Activated B cell treated with CpG ODN at 0.5 μM for 24 hours (primary cell): ENCODE measurements at regions of chr4 and their contacts with region 1.

Region 1: DNA sequence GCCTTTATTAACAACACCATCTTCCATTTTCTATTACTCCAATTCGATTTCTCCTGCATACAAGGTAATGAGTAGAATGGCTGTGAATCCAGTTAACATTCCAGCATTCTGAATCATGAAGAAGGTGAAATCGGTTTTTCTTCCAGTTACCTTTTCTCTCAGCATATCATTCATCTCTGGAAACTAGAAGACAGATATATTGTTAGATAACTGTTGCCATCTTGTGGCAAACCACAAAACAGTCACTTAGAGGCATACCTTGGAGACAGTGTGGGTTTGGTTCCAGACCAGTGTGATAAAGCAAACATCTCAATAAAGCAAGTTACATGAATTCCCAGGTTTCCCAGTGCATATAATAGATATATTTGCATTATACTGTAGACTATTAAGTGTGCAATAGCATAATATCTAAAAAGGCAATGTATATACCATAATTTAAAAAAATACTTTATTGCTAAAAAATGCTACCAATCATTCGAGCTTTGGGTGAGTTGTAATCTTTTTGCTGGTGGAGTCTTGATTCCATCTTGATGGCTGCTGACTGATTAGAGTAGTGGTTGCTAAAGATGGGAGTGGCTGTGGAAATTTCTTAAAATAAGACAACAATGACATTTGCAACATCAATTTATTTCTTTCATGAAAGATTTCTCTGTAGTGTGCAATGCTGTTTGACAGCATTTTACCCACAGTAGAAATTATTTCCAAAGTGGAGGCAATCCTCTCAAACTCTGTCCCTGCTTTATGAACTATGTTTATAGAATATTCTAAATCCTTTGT is 82.1 kb downstream of the SLC39A8 start:
- DNase-seq: no peak
- ATAC-seq: peak; percentile 79
- H3K4me3 Mint-ChIP-seq: no peak overlapping the region
- H3K27ac Mint-ChIP-seq: no peak overlapping the region
- H3K4me1 Mint-ChIP-seq: peaks cover 2% of the 10 kb centered on the region
- H3K27me3 Mint-ChIP-seq: no peaks in the 10 kb centered on the region
- CTCF ChIP-seq: peak; percentile 25

Region 2: GRCh38 chr4:100848869-100849268 is 1414.3 kb before region 1 on chr4:
- CTCF ChIA-PET with region 1: interaction called, 4 read pairs
- POLR2A ChIA-PET with region 1: no interaction called
- intact Hi-C with region 1: loop called (anchors 5 kb)
- DNase-seq: no peak
- ATAC-seq: no peak
- H3K4me3 Mint-ChIP-seq: no peak overlapping the region
- H3K27ac Mint-ChIP-seq: no peak overlapping the region
- H3K4me1 Mint-ChIP-seq: no peaks in the 10 kb centered on the region
- H3K27me3 Mint-ChIP-seq: no peaks in the 10 kb centered on the region
- CTCF ChIP-seq: no peak

Region 3: GRCh38 chr4:100935090-100935489 is 1328.1 kb before region 1 on chr4:
- CTCF ChIA-PET with region 1: interaction called, 3 read pairs
- POLR2A ChIA-PET with region 1: no interaction called
- intact Hi-C with region 1: loop called (anchors 2 kb)
- DNase-seq: no peak
- ATAC-seq: no peak
- H3K4me3 Mint-ChIP-seq: no peak overlapping the region
- H3K27ac Mint-ChIP-seq: no peak overlapping the region
- H3K4me1 Mint-ChIP-seq: peaks cover 2% of the 10 kb centered on the region
- H3K27me3 Mint-ChIP-seq: no peaks in the 10 kb centered on the region
- CTCF ChIP-seq: no peak

Region 4: GRCh38 chr4:101169044-101170014 is 1093.9 kb before region 1 on chr4:
- CTCF ChIA-PET with region 1: interaction called, 5 read pairs
- POLR2A ChIA-PET with region 1: no interaction called
- intact Hi-C with region 1: loop called (anchors 1 kb)
- DNase-seq: no peak
- ATAC-seq: peak; percentile 99
- H3K4me3 Mint-ChIP-seq: no peak overlapping the region
- H3K27ac Mint-ChIP-seq: no peak overlapping the region
- H3K4me1 Mint-ChIP-seq: peaks cover 21% of the 10 kb centered on the region
- H3K27me3 Mint-ChIP-seq: no peaks in the 10 kb centered on the region
- CTCF ChIP-seq: no peak

Region 5: GRCh38 chr4:102217345-102217744 is 45.9 kb before region 1 on chr4:
- CTCF ChIA-PET with region 1: no interaction called
- POLR2A ChIA-PET with region 1: no interaction called
- intact Hi-C with region 1: no loop called
- DNase-seq: no peak
- ATAC-seq: no peak
- H3K4me3 Mint-ChIP-seq: no peak overlapping the region
- H3K27ac Mint-ChIP-seq: no peak overlapping the region
- H3K4me1 Mint-ChIP-seq: no peaks in the 10 kb centered on the region
- H3K27me3 Mint-ChIP-seq: peaks cover 10% of the 10 kb centered on the region
- CTCF ChIP-seq: no peak

Region 6: GRCh38 chr4:102430461-102430910 is 167.3 kb after region 1 on chr4:
- CTCF ChIA-PET with region 1: no interaction called
- POLR2A ChIA-PET with region 1: no interaction called
- intact Hi-C with region 1: loop called (anchors 5 kb)
- DNase-seq: no peak
- ATAC-seq: no peak
- H3K4me3 Mint-ChIP-seq: peak overlapping the region; percentile 92
- H3K27ac Mint-ChIP-seq: peak overlapping the region; percentile 76
- H3K4me1 Mint-ChIP-seq: peaks cover 5% of the 10 kb centered on the region
- H3K27me3 Mint-ChIP-seq: no peaks in the 10 kb centered on the region
- CTCF ChIP-seq: no peak

Region 7: GRCh38 chr4:102815981-102816380 is 552.8 kb after region 1 on chr4:
- CTCF ChIA-PET with region 1: no interaction called
- POLR2A ChIA-PET with region 1: no interaction called
- intact Hi-C with region 1: no loop called
- DNase-seq: no peak
- ATAC-seq: no peak
- H3K4me3 Mint-ChIP-seq: no peak overlapping the region
- H3K27ac Mint-ChIP-seq: no peak overlapping the region
- H3K4me1 Mint-ChIP-seq: peaks cover 82% of the 10 kb centered on the region
- H3K27me3 Mint-ChIP-seq: no peaks in the 10 kb centered on the region
- CTCF ChIP-seq: no peak